Activated T-helper 2 cell treated with anti-CD3 and anti-CD28 coated beads, Interferon-gamma antibody, Interleukin-2, Interleukin-4, amounts not matched to agents 10 μg/mL and 5 μg/mL and 100 μg/mL, durations not matched to agents 14 hours and 24 hours and 36 hours (primary cell): ENCODE measurements at regions of chr2 and their contacts with region 1.

Region 1: DNA sequence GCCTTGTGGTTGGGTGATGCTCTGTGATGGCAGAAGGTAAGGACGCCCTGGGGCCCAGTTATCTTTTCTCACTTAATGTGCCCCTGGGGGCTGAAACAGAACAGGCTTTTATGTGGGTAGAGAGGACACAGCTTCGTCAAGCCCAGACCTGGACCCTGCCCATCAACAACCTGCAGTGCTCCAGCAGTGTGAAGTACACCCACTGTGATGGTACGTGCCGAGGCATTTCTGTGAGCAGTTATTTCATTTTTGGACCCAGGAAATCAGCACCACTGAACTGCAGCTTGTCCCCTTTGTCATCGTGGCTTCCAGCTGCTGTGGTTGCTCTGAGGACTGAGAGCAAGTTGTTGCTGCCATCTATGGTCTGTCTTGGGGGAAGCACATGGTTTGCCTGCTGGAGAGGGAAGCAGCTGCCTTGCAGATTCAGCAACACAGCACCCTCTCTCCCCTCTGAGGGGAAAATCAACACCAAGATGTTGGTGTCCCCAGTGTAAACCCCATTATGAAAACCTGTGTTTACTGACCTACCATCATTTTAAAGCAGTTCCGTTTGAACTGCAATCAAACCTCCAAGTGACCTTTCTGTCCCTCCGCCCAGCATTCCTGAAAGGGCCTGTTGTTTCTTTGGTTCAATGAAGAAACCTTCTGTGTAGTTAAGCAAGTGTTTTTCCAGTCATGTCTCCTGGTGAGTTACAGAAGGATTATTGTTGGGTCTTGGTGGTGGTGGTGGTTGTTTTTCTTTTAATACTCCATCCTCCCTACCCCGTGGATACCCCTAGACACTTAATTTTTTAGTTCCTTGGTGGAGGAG is 158.2 kb downstream of the MGAT5 start:
- DNase-seq: peak; percentile 44
- H3K4me3 Mint-ChIP-seq: no peak overlapping the region
- H3K27ac Mint-ChIP-seq: no peak overlapping the region
- H3K4me1 Mint-ChIP-seq: peaks cover 5% of the 10 kb centered on the region
- H3K27me3 Mint-ChIP-seq: peaks cover 4% of the 10 kb centered on the region

Region 2: DNA sequence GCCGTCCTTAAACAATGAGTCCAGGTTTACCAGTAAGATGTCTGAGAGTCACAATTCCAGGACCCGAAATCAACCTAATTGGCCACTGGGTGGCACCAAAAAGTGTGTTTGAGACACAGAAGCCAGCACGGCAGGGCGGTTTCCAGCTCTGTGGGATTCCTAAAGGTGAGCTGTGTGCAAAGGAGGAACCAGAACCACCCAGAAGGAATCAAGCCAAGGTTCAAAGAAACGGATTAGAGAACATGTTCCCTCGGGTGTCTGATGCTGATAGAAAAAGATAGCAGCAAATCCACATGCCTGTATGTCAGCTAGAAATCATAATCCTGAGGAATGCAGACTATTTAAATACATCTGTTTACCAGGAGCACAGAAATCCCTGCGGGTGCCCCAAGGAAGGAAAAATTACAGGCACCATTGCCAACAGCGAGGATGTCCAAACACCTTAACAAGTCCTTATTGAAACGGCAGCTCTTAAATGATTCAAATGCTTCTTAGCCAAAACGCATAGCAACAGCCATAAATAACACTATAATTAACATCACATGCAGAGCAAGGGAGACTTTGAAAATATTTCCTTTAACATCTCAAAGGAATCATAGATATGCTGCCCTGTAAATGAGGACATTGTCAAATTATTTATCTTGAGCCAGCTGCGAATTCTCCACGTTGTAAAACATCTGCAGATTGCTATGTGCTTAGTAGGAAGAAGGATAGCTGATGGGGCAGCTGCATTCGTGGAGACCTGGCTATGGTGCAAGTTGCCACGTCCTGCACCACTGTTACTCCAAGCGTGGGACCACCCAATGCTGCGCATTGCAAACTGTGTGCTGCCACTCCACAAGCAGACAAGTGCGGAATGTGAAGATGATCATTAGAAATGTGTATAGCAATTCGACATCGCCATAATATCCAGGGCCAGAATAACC is 525.0 kb before region 1 on chr2:
- intact Hi-C with region 1: loop called (anchors 10 kb)
- DNase-seq: no peak
- H3K4me3 Mint-ChIP-seq: no peak overlapping the region
- H3K27ac Mint-ChIP-seq: no peak overlapping the region
- H3K4me1 Mint-ChIP-seq: no peaks in the 10 kb centered on the region
- H3K27me3 Mint-ChIP-seq: no peaks in the 10 kb centered on the region

Region 3: GRCh38 chr2:134207564-134208209 is 204.3 kb before region 1 on chr2:
- intact Hi-C with region 1: loop called (anchors 5 kb)
- DNase-seq: no peak
- H3K4me3 Mint-ChIP-seq: no peak overlapping the region
- H3K27ac Mint-ChIP-seq: no peak overlapping the region
- H3K4me1 Mint-ChIP-seq: peaks cover 11% of the 10 kb centered on the region
- H3K27me3 Mint-ChIP-seq: no peaks in the 10 kb centered on the region

Region 4: DNA sequence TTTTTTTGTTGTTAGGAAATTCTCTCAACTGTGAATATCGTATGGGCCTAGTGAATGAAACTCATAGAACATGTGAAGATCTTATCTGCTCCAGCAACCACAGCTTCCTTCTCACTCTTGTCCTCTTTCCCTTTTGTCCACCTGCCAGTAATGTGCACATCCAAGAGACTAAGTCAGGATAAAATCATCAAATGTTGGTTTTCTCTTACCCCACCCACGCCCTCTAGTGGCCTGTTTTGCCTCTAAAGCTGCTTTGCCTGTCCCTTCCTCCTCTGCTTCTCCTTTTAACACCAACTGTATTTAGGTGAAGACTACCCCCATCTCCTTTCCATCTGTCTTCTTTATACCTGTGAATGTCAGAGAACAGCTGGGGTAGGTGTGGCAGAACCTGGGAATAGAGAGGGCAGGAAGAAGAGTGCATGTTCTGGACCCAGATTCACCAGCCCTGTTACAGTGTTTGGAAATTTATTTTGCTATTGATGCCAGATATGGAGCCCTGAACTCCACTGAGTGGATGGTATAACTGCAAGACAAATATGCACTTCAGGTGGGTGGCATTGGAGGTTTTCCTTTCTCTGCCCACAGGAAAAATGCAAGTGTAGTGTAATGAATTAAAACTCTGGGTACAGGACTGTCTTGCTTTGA is 166.6 kb before region 1 on chr2:
- intact Hi-C with region 1: loop called (anchors 1 kb)
- DNase-seq: peak; percentile 41
- H3K4me3 Mint-ChIP-seq: no peak overlapping the region
- H3K27ac Mint-ChIP-seq: no peak overlapping the region
- H3K4me1 Mint-ChIP-seq: peaks cover 31% of the 10 kb centered on the region
- H3K27me3 Mint-ChIP-seq: peaks cover 68% of the 10 kb centered on the region